Activated CD8-positive, alpha-beta memory T cell treated with anti-CD3 and anti-CD28 coated beads, Interleukin-2, amount 10 ng/mL, durations not matched to agents 7 days and 5 days (primary cell): ENCODE measurements at regions of chr12 and their contacts with region 1.

Region 1: DNA sequence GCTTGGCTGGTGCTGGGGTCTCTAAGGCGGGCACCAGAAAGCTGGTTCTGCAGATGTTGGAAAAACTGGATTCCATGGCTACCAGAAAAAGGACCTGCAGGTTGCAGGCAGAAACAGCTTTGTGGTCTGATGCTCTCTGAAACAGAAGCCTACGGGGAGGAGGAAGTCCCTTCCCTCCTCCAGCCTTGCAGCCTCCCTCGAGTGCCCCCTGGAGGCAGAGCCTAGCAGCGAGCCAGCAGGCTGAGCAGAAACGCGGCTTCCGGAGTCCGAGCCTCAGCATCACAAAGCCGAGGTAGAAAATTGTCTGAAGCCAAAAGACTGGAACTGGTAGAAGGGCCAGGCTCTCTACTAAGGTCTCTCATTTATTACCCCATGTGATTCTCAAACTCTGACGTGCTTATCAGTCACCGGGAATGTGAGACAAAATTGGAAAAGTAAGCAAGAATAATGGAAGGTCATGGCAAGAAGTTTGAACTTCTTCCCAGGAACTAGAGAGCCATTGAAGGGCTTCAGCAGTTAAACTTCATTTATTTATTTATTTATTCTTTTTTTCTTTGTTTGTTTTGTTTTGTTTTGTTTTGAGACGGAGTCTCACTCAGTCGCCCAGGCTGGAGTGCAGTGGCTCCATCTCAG is 82.2 kb upstream of the CPSF6 start:
- DNase-seq: peak; percentile 96
- ATAC-seq: peak; percentile 91
- H3K4me3 Mint-ChIP-seq: peak overlapping the region; percentile 44
- H3K27ac Mint-ChIP-seq: peak overlapping the region; percentile 72
- H3K4me1 Mint-ChIP-seq: peaks cover 43% of the 10 kb centered on the region
- H3K27me3 Mint-ChIP-seq: no peaks in the 10 kb centered on the region

Region 2: GRCh38 chr12:69120354-69120753 is 36.8 kb before region 1 on chr12:
- CTCF ChIA-PET with region 1: no interaction called
- DNase-seq: no peak
- ATAC-seq: no peak
- H3K4me3 Mint-ChIP-seq: no peak overlapping the region
- H3K27ac Mint-ChIP-seq: no peak overlapping the region
- H3K4me1 Mint-ChIP-seq: no peaks in the 10 kb centered on the region
- H3K27me3 Mint-ChIP-seq: peaks cover 7% of the 10 kb centered on the region

Region 3: GRCh38 chr12:69168828-69169227 is 11.7 kb after region 1 on chr12:
- CTCF ChIA-PET with region 1: interaction called, 12 read pairs
- DNase-seq: no peak
- ATAC-seq: no peak
- H3K4me3 Mint-ChIP-seq: no peak overlapping the region
- H3K27ac Mint-ChIP-seq: no peak overlapping the region
- H3K4me1 Mint-ChIP-seq: peaks cover 4% of the 10 kb centered on the region
- H3K27me3 Mint-ChIP-seq: no peaks in the 10 kb centered on the region

Region 4: GRCh38 chr12:69211160-69211559 is 54.0 kb after region 1 on chr12:
- CTCF ChIA-PET with region 1: no interaction called
- DNase-seq: no peak
- ATAC-seq: no peak
- H3K4me3 Mint-ChIP-seq: no peak overlapping the region
- H3K27ac Mint-ChIP-seq: no peak overlapping the region
- H3K4me1 Mint-ChIP-seq: no peaks in the 10 kb centered on the region
- H3K27me3 Mint-ChIP-seq: no peaks in the 10 kb centered on the region

Region 5: DNA sequence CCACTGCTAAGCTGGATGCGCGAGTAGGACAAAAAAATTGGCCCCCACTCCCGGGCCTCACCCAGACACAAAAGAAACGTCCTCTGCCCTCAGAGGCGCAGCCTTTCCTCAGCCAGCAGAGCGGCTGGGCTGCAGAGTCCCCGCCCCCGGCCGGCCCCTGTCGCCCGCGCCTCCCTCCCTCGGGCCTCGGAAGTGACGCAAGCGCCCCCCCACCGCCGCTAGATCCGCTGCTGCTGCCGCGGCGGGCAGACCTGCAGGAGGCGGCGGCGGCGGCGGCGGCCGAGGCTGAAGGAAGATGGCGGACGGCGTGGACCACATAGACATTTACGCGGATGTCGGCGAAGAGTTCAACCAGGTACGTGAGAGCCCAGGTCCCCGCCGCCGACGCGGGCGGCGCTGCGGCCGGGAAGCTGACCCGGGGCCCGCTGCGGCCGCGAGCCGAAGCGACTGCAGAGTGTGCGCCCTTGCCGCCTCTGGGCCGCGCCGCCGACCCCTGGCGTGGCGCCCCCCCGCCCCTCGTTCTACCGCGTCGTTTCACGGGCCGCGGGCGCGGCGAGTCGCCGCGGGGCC is 82.3 kb after region 1 on chr12 and contains the start of gene CPSF6:
- CTCF ChIA-PET with region 1: interaction called, 37 read pairs
- DNase-seq: peak; percentile 97
- ATAC-seq: peak; percentile 93
- H3K4me3 Mint-ChIP-seq: peak within 1 kb of the TSS; percentile 97
- H3K27ac Mint-ChIP-seq: peak within 1 kb of the TSS; percentile 99
- H3K4me1 Mint-ChIP-seq: peaks cover 49% of the 10 kb centered on the region
- H3K27me3 Mint-ChIP-seq: no peaks in the 10 kb centered on the region
- total RNA-seq, gene CPSF6: 103 to 113 TPM

Region 6: DNA sequence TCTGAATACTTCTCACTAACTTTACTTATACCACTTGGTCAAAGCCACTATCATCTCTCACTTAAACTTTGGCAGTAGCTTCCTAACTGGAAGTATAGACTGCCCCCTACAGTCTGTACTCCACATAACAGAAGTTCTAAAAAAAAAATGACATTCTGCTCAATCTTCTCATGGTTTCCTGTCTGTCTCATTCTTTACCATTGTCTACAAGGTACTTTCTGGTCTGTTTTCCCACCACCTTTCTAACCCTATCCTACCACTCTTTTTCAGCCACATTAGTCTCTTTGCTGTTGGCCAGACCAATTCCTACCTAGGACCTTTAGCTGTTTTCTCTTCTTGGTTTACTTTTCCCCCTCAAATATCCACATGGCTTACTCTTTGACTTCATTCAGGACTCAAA is 96.9 kb after region 1 on chr12:
- CTCF ChIA-PET with region 1: interaction called, 49 read pairs
- DNase-seq: no peak
- ATAC-seq: peak; percentile 80
- H3K4me3 Mint-ChIP-seq: no peak overlapping the region
- H3K27ac Mint-ChIP-seq: peak overlapping the region; percentile 76
- H3K4me1 Mint-ChIP-seq: peaks cover 42% of the 10 kb centered on the region
- H3K27me3 Mint-ChIP-seq: no peaks in the 10 kb centered on the region

Region 7: GRCh38 chr12:69275471-69275891 is 118.3 kb after region 1 on chr12:
- CTCF ChIA-PET with region 1: interaction called, 10 read pairs
- DNase-seq: no peak
- ATAC-seq: peak; percentile 60
- H3K4me3 Mint-ChIP-seq: no peak overlapping the region
- H3K27ac Mint-ChIP-seq: peak overlapping the region; percentile 31
- H3K4me1 Mint-ChIP-seq: peaks cover 23% of the 10 kb centered on the region
- H3K27me3 Mint-ChIP-seq: no peaks in the 10 kb centered on the region

Region 8: GRCh38 chr12:69359531-69360347 is 202.6 kb after region 1 on chr12 and contains the start of gene YEATS4:
- CTCF ChIA-PET with region 1: interaction called, 14 read pairs
- DNase-seq: peak; percentile 95
- ATAC-seq: peak; percentile 87
- H3K4me3 Mint-ChIP-seq: peak within 1 kb of the TSS; percentile 97
- H3K27ac Mint-ChIP-seq: peak within 1 kb of the TSS; percentile 95
- H3K4me1 Mint-ChIP-seq: peaks cover 40% of the 10 kb centered on the region
- H3K27me3 Mint-ChIP-seq: peaks cover 2% of the 10 kb centered on the region
- total RNA-seq, gene YEATS4: 40.9 to 47.3 TPM

Region 9: DNA sequence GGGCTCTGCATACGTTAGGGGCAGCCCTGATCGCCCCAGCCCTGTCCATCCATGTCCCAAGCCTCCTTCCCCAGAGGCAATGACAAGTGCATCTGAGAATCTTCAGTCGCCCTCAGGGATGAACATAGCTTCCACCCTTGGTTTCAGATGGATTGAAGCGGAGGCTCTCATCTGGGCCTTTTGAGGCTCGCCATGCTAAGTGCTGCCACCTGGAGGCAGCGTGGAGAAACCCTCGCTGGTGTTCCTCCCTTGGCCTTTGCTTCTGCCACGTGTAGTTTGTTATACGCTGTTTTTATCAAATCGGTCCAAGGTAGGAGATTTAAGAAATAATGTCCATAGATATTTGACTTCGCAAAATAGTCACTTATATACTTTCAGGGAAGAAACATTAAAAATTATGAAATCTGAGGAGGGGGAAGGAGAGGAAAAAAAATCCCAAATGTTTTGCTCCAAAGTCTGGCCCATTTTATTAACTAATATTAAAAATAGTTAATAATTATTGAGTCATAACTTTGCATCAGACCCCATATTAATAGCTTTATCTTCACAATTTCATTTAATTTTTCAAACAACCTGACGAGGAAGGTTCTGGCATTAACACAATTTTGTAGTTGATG is 482.4 kb after region 1 on chr12:
- CTCF ChIA-PET with region 1: interaction called, 11 read pairs
- DNase-seq: peak; percentile 71
- ATAC-seq: peak; percentile 89
- H3K4me3 Mint-ChIP-seq: no peak overlapping the region
- H3K27ac Mint-ChIP-seq: no peak overlapping the region
- H3K4me1 Mint-ChIP-seq: no peaks in the 10 kb centered on the region
- H3K27me3 Mint-ChIP-seq: peaks cover 2% of the 10 kb centered on the region